ENCODE measurements at regions of chr18 and their contacts with region 1.

Region 1: GRCh38 chr18:10953672-10954071 is 195.7 kb downstream of the PIEZO2 start:
- DNase-seq: no peak
- ATAC-seq: no peak
- H3K4me3 ChIP-seq: no peak overlapping the region
- H3K27ac ChIP-seq: no peak overlapping the region
- H3K4me1 ChIP-seq: no peaks in the 10 kb centered on the region
- H3K27me3 ChIP-seq: no peaks in the 10 kb centered on the region
- CTCF ChIP-seq: no peak
- POLR2A ChIP-seq: no peak
- RAD21 ChIP-seq: no peak

Region 2: DNA sequence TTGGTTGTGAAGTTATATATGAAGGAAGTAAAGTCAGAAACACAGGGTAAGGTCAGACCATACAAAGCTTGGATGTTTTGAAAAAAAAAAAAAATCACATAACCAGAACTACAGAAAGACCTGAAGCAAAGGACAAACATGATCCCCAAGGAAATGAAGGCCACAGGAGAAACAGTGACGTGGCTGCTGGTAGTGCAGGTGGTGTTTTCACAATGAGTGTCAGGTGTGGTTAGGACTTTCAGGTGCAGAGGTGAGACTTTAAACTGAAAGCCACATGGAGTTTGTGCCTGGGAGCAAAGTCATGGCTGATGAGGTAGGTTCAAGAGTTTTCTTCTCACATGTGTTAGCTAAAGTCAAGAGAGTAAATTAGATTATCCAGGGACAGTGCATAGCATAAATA is 75.0 kb before region 1 on chr18:
- CTCF ChIA-PET with region 1: no interaction called
- POLR2A ChIA-PET with region 1: no interaction called
- dilution Hi-C with region 1: no loop called
- in situ Hi-C with region 1: no loop called
- intact Hi-C with region 1: loop called (anchors 10 kb)
- DNase-seq: no peak
- ATAC-seq: no peak
- H3K4me3 ChIP-seq: no peak overlapping the region
- H3K27ac ChIP-seq: no peak overlapping the region
- H3K4me1 ChIP-seq: no peaks in the 10 kb centered on the region
- H3K27me3 ChIP-seq: no peaks in the 10 kb centered on the region
- CTCF ChIP-seq: no peak
- POLR2A ChIP-seq: no peak
- RAD21 ChIP-seq: no peak

Region 3: DNA sequence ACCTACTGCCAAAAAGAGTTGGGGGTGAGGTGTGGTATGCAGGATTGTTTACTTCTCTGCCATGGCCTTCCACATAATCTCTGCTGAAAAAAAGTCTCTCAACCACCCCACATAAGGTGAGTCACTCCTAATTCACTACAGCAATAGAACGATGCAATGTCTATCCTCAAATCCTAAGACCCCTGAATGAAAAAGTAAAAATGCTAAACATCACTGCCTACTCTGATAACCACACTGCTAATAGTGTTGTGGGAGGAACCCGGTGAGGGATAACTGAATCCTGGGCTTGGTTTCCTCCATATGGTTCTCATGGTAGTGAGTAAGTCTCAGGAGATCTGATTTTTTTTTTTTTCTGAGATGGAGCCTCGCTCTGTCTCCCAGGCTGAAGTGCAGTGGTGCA is 56.8 kb before region 1 on chr18:
- CTCF ChIA-PET with region 1: no interaction called
- POLR2A ChIA-PET with region 1: no interaction called
- dilution Hi-C with region 1: no loop called
- in situ Hi-C with region 1: no loop called
- intact Hi-C with region 1: no loop called
- DNase-seq: peak; percentile 40
- ATAC-seq: peak; percentile 42
- H3K4me3 ChIP-seq: no peak overlapping the region
- H3K27ac ChIP-seq: no peak overlapping the region
- H3K4me1 ChIP-seq: peaks cover 7% of the 10 kb centered on the region; the same call in 1 of the 2 replicates
- H3K27me3 ChIP-seq: no peaks in the 10 kb centered on the region
- CTCF ChIP-seq: no peak
- POLR2A ChIP-seq: no peak
- RAD21 ChIP-seq: no peak

Region 4: DNA sequence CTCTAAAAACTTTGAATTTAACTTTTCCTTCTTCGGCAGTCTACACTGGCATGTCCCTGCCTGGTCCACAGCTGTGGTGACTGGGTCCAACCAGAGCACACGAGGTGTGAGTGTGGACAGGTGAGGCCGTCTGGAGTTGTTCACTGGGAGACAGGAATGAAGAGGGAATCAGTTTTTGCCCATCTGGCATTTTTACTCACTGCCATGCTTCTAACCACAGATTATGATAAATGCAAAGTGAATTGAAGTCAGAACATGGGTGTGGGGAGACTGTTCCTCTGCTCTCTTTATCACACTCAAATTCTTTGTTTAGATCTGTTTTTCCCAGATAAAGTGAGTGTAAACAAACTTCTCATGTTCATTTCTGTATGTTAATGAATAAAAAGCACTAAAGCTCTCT is 250.3 kb after region 1 on chr18:
- CTCF ChIA-PET with region 1: no interaction called
- POLR2A ChIA-PET with region 1: no interaction called
- dilution Hi-C with region 1: no loop called
- in situ Hi-C with region 1: no loop called
- intact Hi-C with region 1: no loop called
- DNase-seq: no peak
- ATAC-seq: no peak
- H3K4me3 ChIP-seq: no peak overlapping the region
- H3K27ac ChIP-seq: no peak overlapping the region
- H3K4me1 ChIP-seq: no peaks in the 10 kb centered on the region
- H3K27me3 ChIP-seq: peaks cover 12% of the 10 kb centered on the region
- CTCF ChIP-seq: no peak
- POLR2A ChIP-seq: no peak
- RAD21 ChIP-seq: no peak